BJ (cell line): ENCODE measurements at regions of chr3 and their contacts with region 1.

Region 1: GRCh38 chr3:23761440-23761896 is 44.3 kb upstream of the UBE2E1 start:
- DNase-seq: no peak
- H3K4me3 ChIP-seq: no peak overlapping the region
- H3K27me3 ChIP-seq: no peaks in the 10 kb centered on the region
- CTCF ChIP-seq: peak; percentile 30

Region 2: DNA sequence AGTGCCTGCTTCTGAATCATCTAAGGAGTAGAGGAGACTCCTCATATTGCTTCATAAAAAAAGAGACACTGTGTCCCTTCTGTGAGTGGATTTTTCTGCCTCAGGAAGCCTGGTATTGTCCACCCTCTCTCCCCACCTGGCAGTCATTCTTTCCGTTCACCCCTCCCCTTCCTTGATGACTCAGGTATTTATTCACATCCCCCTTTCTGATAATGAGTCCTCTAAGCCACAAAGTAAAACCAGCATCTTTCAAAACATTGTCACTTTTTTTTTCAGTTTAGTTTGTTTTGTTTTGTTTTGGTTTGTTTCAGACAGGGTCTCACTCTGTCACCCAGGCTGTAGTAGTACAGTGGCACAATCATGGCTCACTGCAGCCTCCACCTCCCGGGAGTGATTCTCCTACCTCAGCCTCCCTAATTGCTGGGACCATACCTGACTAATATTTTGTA is 20.9 kb before region 1 on chr3:
- CTCF ChIA-PET with region 1: no interaction called
- POLR2A ChIA-PET with region 1: interaction called, 11 read pairs
- DNase-seq: no peak
- H3K4me3 ChIP-seq: no peak overlapping the region
- H3K27me3 ChIP-seq: no peaks in the 10 kb centered on the region
- CTCF ChIP-seq: no peak